ENCODE measurements at regions of chr17 and their contacts with region 1.

Region 1: GRCh38 chr17:67258821-67259468 is 13.9 kb upstream of the HELZ start:
- DNase-seq: no peak
- H3K4me3 ChIP-seq: no peak overlapping the region
- H3K27ac ChIP-seq: peak overlapping the region; percentile 45 to 75
- H3K4me1 ChIP-seq: peaks cover 12% of the 10 kb centered on the region
- H3K27me3 ChIP-seq: no peaks in the 10 kb centered on the region
- CTCF ChIP-seq: no peak
- EP300 ChIP-seq: no peak
- POLR2A ChIP-seq: no peak

Region 2: DNA sequence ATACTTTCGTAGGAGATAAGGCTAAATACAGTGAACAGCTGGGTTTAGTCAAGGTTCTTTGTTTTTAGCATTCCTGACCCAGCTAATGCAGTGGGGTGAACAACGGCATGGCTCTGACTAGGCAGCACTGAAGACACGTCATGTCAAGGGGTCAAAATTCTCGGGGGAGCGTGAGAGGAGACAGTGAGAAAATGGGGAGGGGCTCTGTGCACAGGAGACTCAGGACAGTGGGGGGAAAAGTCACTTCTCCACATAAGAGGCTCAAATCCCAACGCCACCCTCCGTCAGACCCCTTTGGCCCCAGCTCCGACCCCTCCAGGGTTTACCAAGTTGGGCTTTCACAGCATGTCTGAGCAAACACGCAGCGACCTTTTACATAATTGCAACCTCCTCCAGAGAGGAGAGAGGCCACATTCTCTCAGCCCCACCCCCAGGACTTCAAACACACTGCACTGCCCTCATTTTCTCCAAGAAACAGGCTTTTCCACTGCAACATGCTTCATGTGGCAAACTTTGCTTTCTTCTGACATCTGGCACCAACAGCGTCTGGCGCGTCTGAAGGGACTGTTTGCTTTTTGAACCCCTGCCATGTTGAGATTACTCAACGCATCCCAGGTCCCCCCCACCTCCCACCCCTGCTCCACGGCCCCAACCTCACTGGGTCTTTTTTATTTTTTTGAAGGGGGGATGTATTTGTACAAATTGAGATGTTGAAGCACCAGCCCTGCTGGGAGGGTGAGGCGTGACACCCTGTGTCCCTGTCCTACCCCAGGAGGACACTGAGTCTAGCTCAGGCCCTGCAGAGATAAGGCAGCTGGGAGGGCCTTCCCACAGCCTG is 1727.5 kb before region 1 on chr17:
- intact Hi-C with region 1: loop called in 1 of 4 experiments (anchors 10 kb)
- DNase-seq: peak; percentile 80 to 88 (median 86)
- H3K4me3 ChIP-seq: no peak overlapping the region
- H3K27ac ChIP-seq: peak overlapping the region in 1 of 2 donors; percentile 71
- H3K4me1 ChIP-seq: peaks cover 24% of the 10 kb centered on the region
- H3K27me3 ChIP-seq: no peaks in the 10 kb centered on the region
- CTCF ChIP-seq: peak in 1 of 3 donors; percentile 24
- EP300 ChIP-seq: no peak
- POLR2A ChIP-seq: no peak

Region 3: DNA sequence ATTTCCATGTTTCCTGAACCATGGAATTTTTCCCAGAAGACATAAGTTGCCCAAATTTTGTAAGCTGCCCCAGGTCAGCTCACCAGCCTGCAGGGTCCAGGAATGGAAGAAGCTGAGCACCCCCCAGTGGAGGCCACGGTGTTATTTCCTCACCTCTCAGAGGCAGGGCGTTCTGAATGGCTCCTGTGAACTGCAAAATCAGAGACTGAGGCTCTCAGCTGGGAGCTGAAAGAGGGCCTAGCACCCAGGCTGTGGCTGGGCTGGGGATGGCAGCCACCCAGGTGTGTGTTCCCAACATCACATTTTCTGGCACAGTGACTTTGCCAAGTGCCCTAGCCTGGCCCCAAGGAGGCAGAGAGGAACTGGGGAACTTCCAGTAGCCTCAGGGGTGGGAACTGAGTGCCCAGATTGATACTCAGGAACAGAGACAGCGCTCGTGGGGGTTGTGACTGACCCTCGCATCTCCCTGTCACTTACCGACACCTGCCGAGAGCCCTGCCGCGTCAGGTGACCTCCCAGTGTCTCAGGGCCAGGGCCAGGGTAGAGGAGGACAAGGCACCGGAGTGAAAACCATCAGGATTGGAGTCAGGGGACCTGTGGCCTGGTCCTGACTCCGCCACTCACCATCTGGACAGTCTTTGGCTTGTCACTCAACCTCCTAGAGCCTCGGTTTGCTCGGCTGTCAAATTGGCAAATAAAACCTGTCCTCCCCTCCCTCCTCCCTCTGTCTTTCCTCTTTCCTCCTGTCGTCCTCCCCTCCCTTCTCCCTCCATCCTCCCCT is 283.2 kb before region 1 on chr17:
- intact Hi-C with region 1: no loop called
- DNase-seq: no peak
- H3K4me3 ChIP-seq: no peak overlapping the region
- H3K27ac ChIP-seq: no peak overlapping the region
- H3K4me1 ChIP-seq: no peaks in the 10 kb centered on the region
- H3K27me3 ChIP-seq: no peaks in the 10 kb centered on the region
- CTCF ChIP-seq: no peak
- EP300 ChIP-seq: no peak
- POLR2A ChIP-seq: no peak

Region 4: GRCh38 chr17:67183531-67183930 is 75.4 kb before region 1 on chr17:
- intact Hi-C with region 1: no loop called
- DNase-seq: no peak
- H3K4me3 ChIP-seq: no peak overlapping the region
- H3K27ac ChIP-seq: no peak overlapping the region
- H3K4me1 ChIP-seq: no peaks in the 10 kb centered on the region
- H3K27me3 ChIP-seq: no peaks in the 10 kb centered on the region
- CTCF ChIP-seq: no peak
- EP300 ChIP-seq: no peak
- POLR2A ChIP-seq: no peak

Measured in ovary (tissue), 10 donors.